Activated T-helper 1 cell treated with anti-CD3 and anti-CD28 coated beads, Interleukin-12 subunit alpha, Interleukin-12 subunit beta, Interleukin-2, Interleukin-4 antibody, amounts not matched to agents 30 ng/mL and 10 ng/mL and 1 ng/mL, durations not matched to agents 14 hours and 24 hours and 36 hours (primary cell): ENCODE measurements at regions of chr1 and their contacts with region 1.

Region 1: DNA sequence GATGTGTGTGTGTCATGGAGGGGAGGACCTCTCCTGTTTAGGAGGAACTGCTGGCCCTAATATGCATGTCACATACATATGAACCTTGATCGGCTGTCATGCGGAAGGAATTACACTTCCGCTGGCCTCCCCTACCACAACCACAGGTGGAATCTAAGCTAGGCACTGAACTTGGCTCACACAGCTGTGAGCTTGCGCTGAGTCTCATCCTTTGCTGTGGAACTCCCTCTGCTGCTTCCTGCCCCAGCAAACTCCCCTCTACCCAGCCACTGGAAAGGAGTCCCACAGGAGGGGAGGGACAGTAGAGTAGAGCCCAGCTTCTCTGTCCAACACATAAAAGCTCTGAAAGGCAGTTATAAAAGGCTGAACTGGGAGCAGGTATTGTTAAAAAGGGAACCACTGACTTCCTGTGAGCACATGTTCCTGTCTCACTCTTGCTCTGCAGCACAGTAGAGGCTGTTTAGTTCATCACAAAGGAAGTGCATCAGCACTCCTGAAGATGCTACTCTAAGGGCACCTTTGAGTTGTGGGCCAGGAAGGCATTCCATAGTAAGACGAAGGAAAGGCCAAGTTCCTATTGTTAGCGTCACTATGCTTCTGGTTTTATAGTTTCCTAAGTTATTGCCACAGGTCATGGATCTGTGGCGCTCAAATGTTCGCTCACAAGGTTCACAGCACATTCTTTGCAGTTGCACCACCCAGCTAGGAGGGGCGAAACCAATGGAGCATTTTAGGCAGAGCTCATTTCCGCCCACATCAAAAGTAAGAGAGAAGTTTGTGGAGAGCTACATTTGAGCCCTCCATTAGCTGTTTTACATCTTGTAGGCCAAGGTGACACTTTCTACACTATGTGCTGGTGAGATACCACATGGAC is 17.7 kb upstream of the PTPRC start:
- DNase-seq: peak; percentile 66
- H3K4me3 Mint-ChIP-seq: peak overlapping the region; percentile 84
- H3K27ac Mint-ChIP-seq: peak overlapping the region; percentile 99
- H3K4me1 Mint-ChIP-seq: peaks cover 82% of the 10 kb centered on the region
- H3K27me3 Mint-ChIP-seq: no peaks in the 10 kb centered on the region

Region 2: DNA sequence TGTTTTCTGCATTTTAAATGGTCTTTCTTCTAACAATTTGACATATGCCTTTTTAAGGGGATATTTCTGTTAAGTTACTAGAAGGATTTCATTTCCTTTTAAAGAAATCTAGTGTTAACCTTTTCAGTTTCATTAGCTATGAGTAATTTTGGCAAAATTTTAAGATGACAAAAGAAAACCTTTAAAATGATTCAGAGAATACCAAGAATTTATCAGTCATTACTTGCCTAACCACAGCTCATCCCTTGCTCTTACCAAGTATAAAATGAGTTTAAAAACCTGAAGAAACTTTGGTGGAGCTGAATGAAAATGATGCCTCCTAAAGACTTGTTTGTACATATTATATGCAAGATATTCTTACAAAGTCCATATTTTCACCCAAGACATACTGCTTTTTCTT is 362.7 kb before region 1 on chr1:
- intact Hi-C with region 1: loop called (anchors 5 kb)
- DNase-seq: no peak
- H3K4me3 Mint-ChIP-seq: peak overlapping the region; percentile 11
- H3K27ac Mint-ChIP-seq: peak overlapping the region; percentile 78
- H3K4me1 Mint-ChIP-seq: peaks cover 50% of the 10 kb centered on the region
- H3K27me3 Mint-ChIP-seq: no peaks in the 10 kb centered on the region

Region 3: DNA sequence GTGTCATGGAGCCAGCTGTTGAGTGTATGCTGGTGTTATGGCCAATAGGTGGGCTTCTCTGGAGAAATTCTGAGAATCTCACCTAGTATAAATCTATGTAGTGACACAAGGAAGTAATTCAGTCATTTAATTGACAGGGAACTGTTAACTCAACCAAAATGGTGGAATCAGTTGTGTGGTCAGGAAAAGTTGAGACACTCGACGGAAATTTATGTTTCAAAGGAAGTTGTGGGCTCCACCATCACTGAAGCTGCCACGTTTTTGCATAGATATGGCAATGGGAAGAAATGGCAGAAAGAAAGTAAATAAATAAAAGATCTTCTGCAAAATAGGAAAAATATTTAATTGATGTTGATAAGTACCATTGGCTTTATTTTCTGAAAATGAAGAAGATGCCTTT is 165.2 kb before region 1 on chr1:
- intact Hi-C with region 1: no loop called
- DNase-seq: no peak
- H3K4me3 Mint-ChIP-seq: no peak overlapping the region
- H3K27ac Mint-ChIP-seq: no peak overlapping the region
- H3K4me1 Mint-ChIP-seq: no peaks in the 10 kb centered on the region
- H3K27me3 Mint-ChIP-seq: no peaks in the 10 kb centered on the region

Region 4: GRCh38 chr1:198601936-198602889 is 19.0 kb before region 1 on chr1:
- intact Hi-C with region 1: loop called (anchors 2 kb)
- DNase-seq: no peak
- H3K4me3 Mint-ChIP-seq: no peak overlapping the region
- H3K27ac Mint-ChIP-seq: peak overlapping the region; percentile 62
- H3K4me1 Mint-ChIP-seq: peaks cover 61% of the 10 kb centered on the region
- H3K27me3 Mint-ChIP-seq: no peaks in the 10 kb centered on the region

Region 5: GRCh38 chr1:198638894-198639635 is 17.9 kb after region 1 on chr1 and contains the start of gene PTPRC:
- intact Hi-C with region 1: loop called (anchors 1 kb)
- DNase-seq: no peak
- H3K4me3 Mint-ChIP-seq: peak within 1 kb of the TSS; percentile 92
- H3K27ac Mint-ChIP-seq: peak within 1 kb of the TSS; percentile 96
- H3K4me1 Mint-ChIP-seq: peaks cover 54% of the 10 kb centered on the region
- H3K27me3 Mint-ChIP-seq: no peaks in the 10 kb centered on the region
- total RNA-seq, gene PTPRC: 512 and 516 TPM in 2 replicates

Region 6: DNA sequence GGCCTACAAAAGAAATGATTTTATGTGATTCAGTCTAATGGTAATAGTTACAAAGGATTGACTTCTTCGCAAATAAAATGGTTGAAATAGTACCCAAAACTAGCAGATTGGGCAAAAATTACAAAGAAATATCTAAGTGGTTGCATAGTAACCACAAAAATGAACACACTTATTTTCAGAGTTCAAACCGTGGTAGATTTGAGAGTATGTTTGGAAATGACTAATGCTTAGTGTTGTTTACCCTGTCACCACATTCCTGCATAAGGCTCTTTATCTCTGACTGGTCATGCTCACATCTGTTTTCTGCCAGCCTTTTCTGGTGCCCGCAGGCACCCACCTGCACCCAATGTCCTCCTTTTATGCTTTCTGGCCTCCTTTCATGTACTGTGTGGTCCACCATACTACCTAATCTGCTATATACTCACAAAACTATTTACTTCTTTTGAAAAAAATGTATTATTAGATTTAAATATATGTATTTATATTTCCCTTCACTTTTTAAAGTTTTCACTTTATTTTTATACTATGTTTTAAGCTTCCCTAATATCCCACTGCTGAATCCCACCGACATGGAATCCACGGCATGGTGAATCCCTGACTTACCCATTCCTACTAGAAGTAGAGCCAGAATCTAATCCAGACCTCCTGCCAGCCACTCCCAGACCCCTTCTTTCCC is 48.0 kb after region 1 on chr1:
- intact Hi-C with region 1: loop called (anchors 1 kb)
- DNase-seq: no peak
- H3K4me3 Mint-ChIP-seq: peak overlapping the region; percentile 63
- H3K27ac Mint-ChIP-seq: peak overlapping the region; percentile 93
- H3K4me1 Mint-ChIP-seq: peaks cover 92% of the 10 kb centered on the region
- H3K27me3 Mint-ChIP-seq: no peaks in the 10 kb centered on the region